ENCODE measurements at regions of chr15 and their contacts with region 1.

Region 1: DNA sequence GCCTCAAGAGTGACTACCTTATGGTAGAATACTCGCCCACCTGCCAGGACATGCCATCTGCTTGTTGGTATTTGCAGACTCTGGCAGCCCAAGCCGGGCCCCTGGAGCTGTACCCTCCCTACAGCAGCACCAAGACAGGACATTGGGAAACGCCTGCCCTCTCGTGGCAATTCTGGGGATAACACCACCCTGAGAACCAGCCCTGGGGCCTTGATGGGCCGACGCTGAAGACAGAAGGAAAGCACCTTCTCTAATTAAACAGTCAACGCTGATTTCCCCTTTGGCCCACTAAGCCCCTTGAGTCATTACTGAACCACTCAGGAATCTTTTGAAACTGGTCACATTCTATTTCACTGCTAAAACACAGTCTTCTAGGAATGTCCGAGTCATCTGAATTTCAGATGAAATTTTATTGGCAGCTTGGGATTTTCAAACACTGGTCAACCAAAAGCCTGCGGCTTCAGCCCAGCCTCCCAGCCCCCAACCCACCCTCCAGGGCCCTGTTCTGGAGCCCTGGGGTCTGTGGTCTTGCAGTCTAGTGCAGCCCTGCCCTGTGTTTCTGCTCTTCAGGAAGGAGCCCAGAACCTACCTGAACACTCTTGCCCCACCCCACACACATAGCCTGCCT is 91.3 kb downstream of the TMEM266 start:
- DNase-seq: peak; percentile 77
- H3K4me3 ChIP-seq: no peak overlapping the region
- H3K27ac ChIP-seq: no peak overlapping the region
- H3K4me1 ChIP-seq: peaks cover 9% of the 10 kb centered on the region
- CTCF ChIP-seq: peak; percentile 92

Region 2: GRCh38 chr15:76012021-76012551 is 139.0 kb before region 1 on chr15 and contains the start of gene NRG4:
- CTCF ChIA-PET with region 1: no interaction called
- POLR2A ChIA-PET with region 1: no interaction called
- intact Hi-C with region 1: no loop called
- DNase-seq: no peak
- H3K4me3 ChIP-seq: no peak within 1 kb of the TSS
- H3K27ac ChIP-seq: no peak within 1 kb of the TSS
- H3K4me1 ChIP-seq: no peaks in the 10 kb centered on the region
- CTCF ChIP-seq: no peak
- total RNA-seq, gene NRG4: not detected in 2 replicates

Region 3: GRCh38 chr15:77158484-77158883 is 1007.4 kb after region 1 on chr15:
- CTCF ChIA-PET with region 1: no interaction called
- POLR2A ChIA-PET with region 1: no interaction called
- intact Hi-C with region 1: loop called (anchors 5 kb)
- DNase-seq: no peak
- H3K4me3 ChIP-seq: no peak overlapping the region
- H3K27ac ChIP-seq: no peak overlapping the region
- H3K4me1 ChIP-seq: peaks cover 7% of the 10 kb centered on the region
- CTCF ChIP-seq: no peak

Measured in OCI-LY7 (cell line).